ENCODE measurements at regions of chr9 and their contacts with region 1.

Region 1: DNA sequence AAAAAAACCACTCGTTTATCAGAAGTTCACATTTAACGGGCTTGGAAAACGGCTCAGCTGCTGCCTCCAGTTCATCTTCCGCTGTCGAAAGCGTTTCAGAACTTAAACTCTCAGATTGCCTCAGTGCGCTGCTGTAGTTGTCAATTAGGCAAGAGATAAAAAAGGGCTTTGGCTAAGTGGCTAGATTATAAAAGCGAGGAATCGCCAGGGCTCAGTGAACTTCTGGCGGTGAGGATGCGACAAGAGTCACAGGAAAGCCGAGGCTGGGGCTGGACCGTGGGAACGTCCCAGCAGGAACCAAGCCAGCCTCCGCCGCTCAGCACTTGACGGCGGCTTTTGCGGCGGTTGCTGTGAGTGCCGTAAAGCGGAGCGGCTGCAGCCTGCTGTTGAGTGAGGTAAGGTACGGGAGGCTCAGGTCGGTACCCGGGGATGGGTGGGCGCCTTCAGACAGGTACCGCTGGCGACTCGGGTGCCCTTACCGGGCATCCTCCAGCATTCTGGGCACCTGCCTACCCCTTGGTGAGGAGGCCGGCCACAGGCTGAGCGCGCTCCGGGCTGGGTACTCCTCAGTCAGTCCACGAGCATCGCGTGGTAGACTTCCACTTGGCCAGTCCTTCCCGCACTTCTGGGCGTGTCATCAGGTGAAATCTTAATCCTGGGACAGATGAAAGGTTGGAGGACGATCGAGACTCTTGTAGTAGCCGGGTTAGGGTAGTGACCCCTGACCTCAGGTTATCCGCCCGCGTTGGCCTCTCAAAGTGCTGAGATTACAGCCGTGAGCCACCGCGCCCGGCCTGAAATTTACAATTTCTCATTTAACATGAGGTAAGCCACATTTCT is at the start of gene FKTN:
- DNase-seq: peak; percentile 92
- H3K4me3 ChIP-seq: peak within 1 kb of the TSS; percentile 52 to 87 (median 67)
- H3K27ac ChIP-seq: peak within 1 kb of the TSS; percentile 27
- H3K4me1 ChIP-seq: peaks cover 9% of the 10 kb centered on the region
- H3K27me3 ChIP-seq: no peaks in the 10 kb centered on the region
- CTCF ChIP-seq: no peak
- POLR2A ChIP-seq: peak; percentile 71
- total RNA-seq, gene FKTN: 13.2 and 14.4 TPM in 2 replicates

Region 2: DNA sequence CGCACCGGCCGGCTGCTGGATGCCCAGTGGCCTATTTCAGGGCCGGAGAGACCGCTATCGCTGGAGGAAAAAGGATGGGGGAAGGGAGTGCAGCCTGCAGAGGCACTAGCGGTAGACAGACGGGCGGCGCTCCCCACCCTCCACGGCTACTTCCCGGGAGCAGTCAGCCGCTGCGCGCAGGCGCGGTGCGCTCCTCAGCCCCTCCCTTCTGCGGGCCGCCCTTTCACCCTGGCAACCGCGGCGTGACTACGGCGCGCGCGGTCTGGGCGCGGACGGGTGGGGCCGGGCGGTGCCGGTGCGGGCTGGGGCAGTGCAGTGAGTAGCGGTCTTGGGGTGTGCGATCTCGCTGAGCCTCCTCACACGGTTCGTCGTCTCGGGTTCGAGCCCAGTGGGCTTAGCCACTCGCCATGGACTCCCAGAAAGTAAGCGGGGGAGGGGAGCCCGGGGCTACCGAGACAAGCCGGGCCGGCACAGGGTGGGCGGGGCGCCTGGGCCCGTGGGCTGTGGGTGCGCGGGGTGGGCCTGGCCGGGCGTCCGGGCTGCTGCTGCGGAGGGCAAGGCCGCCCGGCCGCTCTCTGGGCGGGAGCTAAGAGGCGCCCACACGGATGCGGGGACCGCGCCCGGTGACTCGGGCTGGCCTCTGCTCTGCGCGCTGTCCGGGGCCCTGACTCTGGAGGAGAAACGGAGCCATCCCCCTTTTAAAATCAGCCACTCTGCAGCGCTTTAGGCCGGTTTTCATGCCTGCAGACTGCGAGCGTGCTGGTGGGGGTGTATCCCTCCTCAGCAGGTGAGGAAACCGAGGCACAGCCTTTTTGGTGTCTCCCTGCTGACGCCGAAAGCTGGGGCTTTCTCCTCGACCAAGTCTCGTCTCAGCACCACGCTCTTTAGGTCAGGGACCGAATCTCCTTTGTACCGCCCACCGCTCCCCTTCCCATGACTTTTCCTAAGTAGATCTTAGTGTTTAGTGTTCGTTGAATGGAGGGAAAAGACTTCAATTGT is 109.9 kb before region 1 on chr9 and contains the start of gene FSD1L:
- CTCF ChIA-PET with region 1: no interaction called
- POLR2A ChIA-PET with region 1: no interaction called
- dilution Hi-C with region 1: no loop called
- intact Hi-C with region 1: loop called (anchors 5 kb)
- DNase-seq: peak; percentile 72
- H3K4me3 ChIP-seq: peak within 1 kb of the TSS; percentile 35 to 84 (median 74)
- H3K27ac ChIP-seq: peak within 1 kb of the TSS; percentile 65
- H3K4me1 ChIP-seq: peaks cover 17% of the 10 kb centered on the region
- H3K27me3 ChIP-seq: no peaks in the 10 kb centered on the region
- CTCF ChIP-seq: no peak
- POLR2A ChIP-seq: peak; percentile 53
- total RNA-seq, gene FSD1L: 7.5 and 8.5 TPM in 2 replicates

Region 3: GRCh38 chr9:105535920-105536668 is 21.9 kb before region 1 on chr9:
- CTCF ChIA-PET with region 1: no interaction called
- POLR2A ChIA-PET with region 1: no interaction called
- dilution Hi-C with region 1: no loop called
- intact Hi-C with region 1: loop called (anchors 2 kb)
- DNase-seq: no peak
- H3K4me3 ChIP-seq: no peak overlapping the region
- H3K27ac ChIP-seq: no peak overlapping the region
- H3K4me1 ChIP-seq: no peaks in the 10 kb centered on the region
- H3K27me3 ChIP-seq: no peaks in the 10 kb centered on the region
- CTCF ChIP-seq: no peak
- POLR2A ChIP-seq: no peak